ENCODE measurements at regions of chr9 and their contacts with region 1.

Region 1: DNA sequence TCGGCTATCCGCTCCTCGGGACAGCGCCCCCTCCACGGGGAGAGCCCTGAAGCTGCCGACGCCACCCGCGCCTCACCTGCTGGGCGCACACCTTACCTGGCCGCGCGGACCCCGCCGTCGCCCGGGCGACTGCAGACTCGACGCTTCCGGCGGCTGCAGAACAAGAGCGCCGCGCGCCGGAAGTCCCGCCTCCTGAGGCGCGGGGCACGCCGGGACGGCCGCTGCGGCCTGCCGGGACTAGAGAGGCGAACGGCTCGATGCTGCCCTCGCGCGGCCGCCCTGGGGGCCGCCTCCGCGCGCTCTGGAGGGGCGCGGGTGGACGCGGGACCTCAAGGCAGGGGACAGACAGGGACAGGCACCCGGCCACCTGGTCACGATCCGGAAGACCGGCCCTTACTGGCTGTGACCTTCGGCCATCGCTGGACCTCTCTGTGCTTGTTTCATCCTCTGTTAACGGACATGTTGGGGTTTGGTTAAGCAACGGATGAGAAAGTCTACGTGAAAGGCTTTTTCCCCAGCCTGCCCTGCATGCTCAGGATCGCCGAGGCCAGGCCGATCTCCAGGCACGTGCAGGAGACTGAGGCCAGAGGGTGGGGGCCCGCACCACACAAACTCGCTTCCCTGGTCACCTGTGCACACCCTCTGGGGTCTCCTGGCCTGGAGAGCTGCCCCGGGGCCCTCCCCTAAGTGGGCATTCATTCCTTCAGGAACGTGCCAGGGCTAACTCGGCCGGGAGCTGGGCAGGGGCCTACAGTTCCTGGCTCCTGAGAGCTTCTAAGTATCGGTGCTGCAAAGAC is at the start of gene SNAPC4:
- DNase-seq: peak; percentile 85
- H3K4me3 Mint-ChIP-seq: peak within 1 kb of the TSS; percentile 78
- H3K27ac Mint-ChIP-seq: peak within 1 kb of the TSS; percentile 59
- H3K4me1 Mint-ChIP-seq: peaks cover 57% of the 10 kb centered on the region
- H3K27me3 Mint-ChIP-seq: no peaks in the 10 kb centered on the region
- total RNA-seq, gene SNAPC4: 12.3 to 14.1 TPM

Region 2: GRCh38 chr9:136245219-136246150 is 154.8 kb before region 1 on chr9 and contains the start of gene QSOX2:
- CTCF ChIA-PET with region 1: no interaction called
- intact Hi-C with region 1: loop called (anchors 2 kb)
- DNase-seq: peak; percentile 85
- H3K4me3 Mint-ChIP-seq: peak within 1 kb of the TSS; percentile 92
- H3K27ac Mint-ChIP-seq: peak within 1 kb of the TSS; percentile 88
- H3K4me1 Mint-ChIP-seq: peaks cover 35% of the 10 kb centered on the region
- H3K27me3 Mint-ChIP-seq: no peaks in the 10 kb centered on the region
- total RNA-seq, gene QSOX2: 17.7 to 18.0 TPM

Region 3: GRCh38 chr9:136363606-136364370 is 36.4 kb before region 1 on chr9 and contains the start of gene DNLZ:
- CTCF ChIA-PET with region 1: interaction called, 3 read pairs
- intact Hi-C with region 1: loop called (anchors 1 kb)
- DNase-seq: peak; percentile 86
- H3K4me3 Mint-ChIP-seq: peak within 1 kb of the TSS; percentile 84
- H3K27ac Mint-ChIP-seq: peak within 1 kb of the TSS; percentile 89
- H3K4me1 Mint-ChIP-seq: peaks cover 5% of the 10 kb centered on the region
- H3K27me3 Mint-ChIP-seq: no peaks in the 10 kb centered on the region
- total RNA-seq, gene DNLZ: 9.9 to 12.0 TPM

Region 4: GRCh38 chr9:136439550-136440408 is 39.5 kb after region 1 on chr9 and contains the start of gene INPP5E:
- CTCF ChIA-PET with region 1: interaction called, 5 read pairs
- intact Hi-C with region 1: loop called (anchors 2 kb)
- DNase-seq: peak; percentile 76
- H3K4me3 Mint-ChIP-seq: peak within 1 kb of the TSS; percentile 79
- H3K27ac Mint-ChIP-seq: peak within 1 kb of the TSS; percentile 56
- H3K4me1 Mint-ChIP-seq: peaks cover 23% of the 10 kb centered on the region
- H3K27me3 Mint-ChIP-seq: no peaks in the 10 kb centered on the region
- total RNA-seq, gene INPP5E: 13.9 to 14.8 TPM

Region 5: GRCh38 chr9:136474974-136475865 is 75.0 kb after region 1 on chr9:
- CTCF ChIA-PET with region 1: no interaction called
- intact Hi-C with region 1: no loop called
- DNase-seq: no peak
- H3K4me3 Mint-ChIP-seq: no peak overlapping the region
- H3K27ac Mint-ChIP-seq: no peak overlapping the region
- H3K4me1 Mint-ChIP-seq: peaks cover 18% of the 10 kb centered on the region
- H3K27me3 Mint-ChIP-seq: no peaks in the 10 kb centered on the region

Region 6: GRCh38 chr9:136539427-136540421 is 139.5 kb after region 1 on chr9:
- CTCF ChIA-PET with region 1: interaction called, 4 read pairs
- intact Hi-C with region 1: loop called (anchors 1 kb)
- DNase-seq: peak; percentile 99
- H3K4me3 Mint-ChIP-seq: peak overlapping the region; percentile 80
- H3K27ac Mint-ChIP-seq: peak overlapping the region; percentile 100
- H3K4me1 Mint-ChIP-seq: peaks cover 70% of the 10 kb centered on the region
- H3K27me3 Mint-ChIP-seq: no peaks in the 10 kb centered on the region

Region 7: GRCh38 chr9:137086531-137087408 is 686.5 kb after region 1 on chr9 and contains the start of gene MAN1B1:
- CTCF ChIA-PET with region 1: no interaction called
- intact Hi-C with region 1: loop called (anchors 5 kb)
- DNase-seq: peak; percentile 100
- H3K4me3 Mint-ChIP-seq: peak within 1 kb of the TSS; percentile 89
- H3K27ac Mint-ChIP-seq: peak within 1 kb of the TSS; percentile 89
- H3K4me1 Mint-ChIP-seq: peaks cover 36% of the 10 kb centered on the region
- H3K27me3 Mint-ChIP-seq: no peaks in the 10 kb centered on the region
- total RNA-seq, gene MAN1B1: 18.7 to 18.9 TPM

Measured in activated naive CD4-positive, alpha-beta T cell treated with anti-CD3 and anti-CD28 coated beads for 36 hours (primary cell).